Right ventricle myocardium superior (tissue), 1 donor: ENCODE measurements at regions of chr2 and their contacts with region 1.

Region 1: GRCh38 chr2:218033590-218034496 is 31.0 kb upstream of the TNS1 start:
- DNase-seq: no peak
- ATAC-seq: no peak

Region 2: GRCh38 chr2:217993817-217994463 is 39.9 kb before region 1 on chr2:
- intact Hi-C with region 1: loop called (anchors 5 kb)
- DNase-seq: peak; percentile 86
- ATAC-seq: peak; percentile 62